ENCODE measurements at regions of chr22 and their contacts with region 1.

Region 1: DNA sequence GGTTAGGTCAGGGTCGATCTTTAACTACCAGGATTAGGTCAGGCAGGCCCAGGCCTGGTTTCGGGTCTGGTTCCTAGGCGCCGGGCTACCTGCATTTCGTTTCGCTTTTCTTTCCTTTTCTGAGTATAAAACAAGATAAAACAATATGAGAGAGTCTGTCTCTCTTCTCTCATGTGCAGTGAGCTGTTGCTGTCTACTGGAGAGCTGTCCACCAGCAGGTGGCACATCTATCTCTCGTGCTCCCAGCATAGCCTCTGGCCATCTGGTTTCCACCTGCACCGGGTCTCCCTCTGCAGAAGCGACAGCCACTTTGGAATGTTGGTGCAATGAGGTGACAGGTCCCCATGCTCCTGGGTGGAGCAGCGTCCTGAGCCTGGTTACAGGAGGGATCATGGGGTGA is 27.6 kb downstream of the RIBC2 start:
- DNase-seq: peak; percentile 21
- H3K4me3 ChIP-seq: no peak overlapping the region
- H3K27ac ChIP-seq: no peak overlapping the region
- H3K4me1 ChIP-seq: no peaks in the 10 kb centered on the region
- H3K27me3 ChIP-seq: peaks cover 0 to 3% of the 10 kb centered on the region in 2 experiments
- CTCF ChIP-seq: peak; percentile 37 to 64
- POLR2A ChIP-seq: no peak

Region 2: GRCh38 chr22:45483918-45484499 is 42.9 kb after region 1 on chr22:
- CTCF ChIA-PET with region 1: no interaction called
- POLR2A ChIA-PET with region 1: no interaction called
- dilution Hi-C with region 1: no loop called
- intact Hi-C with region 1: no loop called
- DNase-seq: no peak
- H3K4me3 ChIP-seq: no peak overlapping the region
- H3K27ac ChIP-seq: no peak overlapping the region
- H3K4me1 ChIP-seq: no peaks in the 10 kb centered on the region
- H3K27me3 ChIP-seq: peaks cover 3 to 4% of the 10 kb centered on the region in 2 experiments
- CTCF ChIP-seq: no peak
- POLR2A ChIP-seq: no peak

Region 3: GRCh38 chr22:45553351-45554039 is 112.4 kb after region 1 on chr22:
- CTCF ChIA-PET with region 1: interaction called, 52 read pairs
- POLR2A ChIA-PET with region 1: no interaction called
- dilution Hi-C with region 1: no loop called
- intact Hi-C with region 1: loop called (anchors 1 kb)
- DNase-seq: peak; percentile 71
- H3K4me3 ChIP-seq: no peak overlapping the region
- H3K27ac ChIP-seq: no peak overlapping the region
- H3K4me1 ChIP-seq: no peaks in the 10 kb centered on the region
- H3K27me3 ChIP-seq: no peaks in the 10 kb centered on the region
- CTCF ChIP-seq: peak; percentile 91 to 98
- POLR2A ChIP-seq: no peak

Measured in endothelial cell of umbilical vein (primary cell).